Dorsolateral prefrontal cortex (tissue), 120 donors: ENCODE measurements at regions of chr2 and their contacts with region 1.

Region 1: GRCh38 chr2:204110338-204110741 is 173.8 kb downstream of the ICOS start:
- DNase-seq: no peak
- H3K4me3 ChIP-seq: no peak overlapping the region
- H3K27ac ChIP-seq: peak overlapping the region in 2 of 59 donors; percentile 7 to 42
- H3K27me3 ChIP-seq: peaks cover 0 to 10% (median 0%) of the 10 kb centered on the region in 45 donors
- CTCF ChIP-seq: no peak

Region 2: GRCh38 chr2:204260162-204260877 is 150.0 kb after region 1 on chr2:
- intact Hi-C with region 1: loop called in 1 of 2 experiments (anchors 10 kb)
- DNase-seq: peak; percentile 15 to 85 (median 60)
- H3K4me3 ChIP-seq: peak overlapping the region in 3 of 59 donors; percentile 8 to 23 (median 19)
- H3K27ac ChIP-seq: peak overlapping the region in 12 of 59 donors; percentile 0 to 78 (median 44)
- H3K27me3 ChIP-seq: no peaks in the 10 kb centered on the region
- CTCF ChIP-seq: peak; percentile 49 to 96 (median 86)